Breast epithelium (tissue), 4 donors: ENCODE measurements at regions of chr17 and their contacts with region 1.

Region 1: DNA sequence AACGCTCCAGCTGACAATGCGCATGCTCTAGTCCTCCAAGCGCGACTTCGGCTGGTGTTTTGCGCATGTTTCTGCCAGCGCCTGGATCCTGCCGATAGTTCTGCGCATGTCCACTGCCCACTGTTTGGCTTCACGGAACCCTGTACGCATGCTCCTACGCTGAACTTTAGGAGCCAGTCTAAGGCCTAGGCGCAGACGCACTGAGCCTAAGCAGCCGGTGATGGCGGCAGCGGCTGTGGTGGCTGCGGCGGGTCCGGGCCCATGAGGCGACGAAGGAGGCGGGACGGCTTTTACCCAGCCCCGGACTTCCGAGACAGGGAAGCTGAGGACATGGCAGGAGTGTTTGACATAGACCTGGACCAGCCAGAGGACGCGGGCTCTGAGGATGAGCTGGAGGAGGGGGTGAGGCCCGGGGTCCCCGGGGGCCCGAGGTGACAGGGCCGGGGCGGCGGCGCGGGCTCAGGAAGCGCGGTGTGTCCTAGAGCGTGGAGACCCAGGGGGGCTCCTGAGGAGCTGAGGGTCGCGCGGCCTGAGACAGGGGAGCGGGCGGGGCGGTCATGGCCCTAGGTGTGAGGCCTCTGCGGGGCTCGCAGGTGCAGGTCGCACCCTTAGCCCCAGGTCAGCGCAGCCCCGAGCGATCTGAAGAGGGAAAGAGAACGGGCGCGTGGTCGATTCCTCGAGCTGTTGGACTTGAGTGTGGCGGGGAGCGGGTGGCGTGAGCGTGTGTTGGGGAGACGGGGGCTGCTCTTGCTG is at the starts of genes RPS6KB1 and TUBD1:
- DNase-seq: peak; percentile 95 to 96
- H3K4me3 ChIP-seq: peak within 1 kb of the TSS; percentile 89 to 99 (median 89)
- H3K27ac ChIP-seq: peak within 1 kb of the TSS; percentile 94 to 95
- H3K4me1 ChIP-seq: peaks cover 0 to 10% of the 10 kb centered on the region in 2 donors
- H3K27me3 ChIP-seq: no peaks in the 10 kb centered on the region
- CTCF ChIP-seq: no peak
- POLR2A ChIP-seq: peak; percentile 72
- total RNA-seq, gene RPS6KB1: 40.3 to 62.3 (median 47.5) TPM
- total RNA-seq, gene TUBD1: 6.6 to 25.0 (median 19.7) TPM

Region 2: DNA sequence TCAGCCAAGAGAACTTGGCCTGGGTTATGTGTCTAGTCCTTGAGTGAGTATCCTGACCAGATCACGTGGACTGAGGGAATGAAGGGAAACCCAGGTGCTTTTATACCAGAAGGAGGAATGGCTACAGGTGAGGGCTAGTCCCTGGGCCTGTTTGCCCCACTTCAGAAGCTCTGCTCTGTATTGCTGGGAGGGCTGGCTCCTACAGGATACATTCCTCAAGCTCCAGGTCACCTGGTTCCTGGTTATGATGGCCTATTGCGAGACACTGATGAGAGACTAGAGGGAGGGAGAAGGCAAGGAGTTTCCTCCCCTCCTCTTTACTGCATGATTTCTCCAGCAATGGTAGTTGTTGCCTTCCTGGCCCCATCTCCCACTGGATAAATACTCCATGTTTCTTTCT is 702.3 kb before region 1 on chr17:
- intact Hi-C with region 1: no loop called
- DNase-seq: no peak
- H3K4me3 ChIP-seq: no peak overlapping the region
- H3K27ac ChIP-seq: no peak overlapping the region
- H3K4me1 ChIP-seq: no peaks in the 10 kb centered on the region
- H3K27me3 ChIP-seq: no peaks in the 10 kb centered on the region
- CTCF ChIP-seq: no peak
- POLR2A ChIP-seq: no peak

Region 3: DNA sequence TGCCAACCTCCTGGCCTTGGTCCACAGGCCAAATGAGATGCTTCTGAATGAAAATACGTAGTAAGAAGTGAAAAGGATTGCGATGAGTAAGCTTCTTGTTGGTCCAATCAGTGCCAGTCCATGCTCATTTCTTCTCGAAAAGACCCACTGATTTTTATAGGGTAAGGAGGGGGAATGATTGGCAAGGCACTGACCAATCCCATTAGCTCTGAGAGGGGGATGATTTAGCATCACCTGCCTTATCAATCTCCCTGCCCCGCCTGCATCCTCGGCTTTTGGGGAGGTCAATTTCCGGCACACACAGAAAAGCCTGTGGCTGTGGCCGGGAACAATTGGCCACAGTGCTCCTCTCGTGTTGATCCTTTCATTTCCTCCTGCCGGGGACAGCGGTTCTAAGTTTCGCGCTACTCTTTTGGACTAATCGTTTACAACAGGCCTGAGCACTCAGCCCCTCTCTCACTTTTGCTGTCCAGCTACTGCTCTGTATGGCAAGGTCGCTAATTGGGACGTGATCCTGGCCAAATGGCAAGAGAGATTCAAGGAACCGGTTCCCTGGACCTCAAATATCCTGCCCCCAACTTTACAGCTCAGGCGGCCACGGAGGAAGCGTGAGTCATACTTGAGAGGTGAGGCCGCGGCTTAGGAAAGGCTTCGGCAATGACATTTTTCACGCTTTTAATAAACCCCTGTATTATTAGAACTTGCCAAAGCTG is 1602.2 kb after region 1 on chr17:
- intact Hi-C with region 1: loop called (anchors 10 kb)
- DNase-seq: peak in 1 of 2 donors; percentile 35
- H3K4me3 ChIP-seq: peak overlapping the region in 2 of 3 donors; percentile 24 to 35
- H3K27ac ChIP-seq: peak overlapping the region; percentile 68 to 82
- H3K4me1 ChIP-seq: no peaks in the 10 kb centered on the region
- H3K27me3 ChIP-seq: no peaks in the 10 kb centered on the region
- CTCF ChIP-seq: no peak
- POLR2A ChIP-seq: no peak